ENCODE measurements at regions of chr1 and their contacts with region 1.

Region 1: DNA sequence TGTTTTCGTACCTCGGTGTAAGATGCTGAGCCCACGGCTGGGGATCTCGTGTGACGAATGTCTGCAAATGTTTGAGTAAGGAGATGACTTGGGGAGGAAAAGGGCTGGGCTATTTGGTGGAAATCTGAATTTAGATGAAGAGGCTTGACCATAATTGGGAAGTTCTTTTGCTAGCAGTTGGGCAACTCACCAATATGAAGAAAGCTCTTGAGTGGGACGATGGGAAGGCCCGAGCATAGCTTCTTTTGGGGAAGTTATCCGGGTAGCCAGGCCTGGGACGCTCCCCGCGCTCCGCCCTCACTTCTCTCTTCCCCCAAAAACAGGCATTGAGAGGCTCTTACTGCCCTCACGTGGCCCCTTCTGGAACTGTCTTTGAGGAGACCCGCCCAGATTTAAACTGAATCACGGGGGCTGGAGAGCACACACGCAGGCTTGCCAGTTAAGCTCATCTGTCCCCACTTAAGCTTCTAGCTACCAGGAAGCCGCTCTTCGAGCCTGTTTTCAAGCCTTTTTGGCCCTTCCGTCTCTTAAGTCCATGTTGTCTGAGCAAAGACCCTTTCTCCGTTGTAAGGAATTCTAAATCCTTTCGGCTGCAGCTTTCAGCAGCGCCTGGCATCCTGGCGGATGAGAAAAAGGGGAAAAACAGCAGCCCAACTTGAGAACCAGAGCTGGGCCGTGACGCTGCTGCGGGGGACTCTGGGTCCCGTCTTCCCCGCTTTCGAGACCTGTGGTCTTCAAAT is 93.1 kb downstream of the NID1 start:
- DNase-seq: peak; percentile 88
- CTCF ChIP-seq: peak; percentile 83

Region 2: DNA sequence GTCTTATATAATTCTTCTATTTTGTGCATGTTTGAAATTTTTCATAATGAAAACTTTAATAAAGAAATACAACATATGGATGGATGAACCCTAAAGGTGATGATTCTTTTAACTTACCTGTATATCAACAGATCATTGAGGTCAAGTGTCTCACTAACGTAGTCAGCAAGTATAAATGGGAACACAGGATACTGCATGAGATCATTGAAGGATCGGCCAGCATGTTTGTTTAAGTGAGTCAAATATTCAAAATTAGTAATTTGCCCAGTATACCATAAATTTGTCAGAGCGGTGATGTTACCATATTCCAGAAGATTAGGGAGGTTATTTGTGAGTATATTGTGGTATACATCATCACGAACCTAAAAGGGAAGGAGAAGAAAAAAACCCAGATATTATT is 251.2 kb before region 1 on chr1:
- CTCF ChIA-PET with region 1: no interaction called
- POLR2A ChIA-PET with region 1: no interaction called
- DNase-seq: no peak
- CTCF ChIP-seq: no peak

Region 3: GRCh38 chr1:235783148-235783776 is 188.5 kb before region 1 on chr1:
- CTCF ChIA-PET with region 1: interaction called, 19 read pairs
- POLR2A ChIA-PET with region 1: no interaction called
- DNase-seq: no peak
- CTCF ChIP-seq: no peak

Region 4: GRCh38 chr1:235917267-235917811 is 54.4 kb before region 1 on chr1:
- CTCF ChIA-PET with region 1: interaction called, 11 read pairs
- POLR2A ChIA-PET with region 1: no interaction called
- DNase-seq: peak; percentile 70
- CTCF ChIP-seq: no peak

Region 5: DNA sequence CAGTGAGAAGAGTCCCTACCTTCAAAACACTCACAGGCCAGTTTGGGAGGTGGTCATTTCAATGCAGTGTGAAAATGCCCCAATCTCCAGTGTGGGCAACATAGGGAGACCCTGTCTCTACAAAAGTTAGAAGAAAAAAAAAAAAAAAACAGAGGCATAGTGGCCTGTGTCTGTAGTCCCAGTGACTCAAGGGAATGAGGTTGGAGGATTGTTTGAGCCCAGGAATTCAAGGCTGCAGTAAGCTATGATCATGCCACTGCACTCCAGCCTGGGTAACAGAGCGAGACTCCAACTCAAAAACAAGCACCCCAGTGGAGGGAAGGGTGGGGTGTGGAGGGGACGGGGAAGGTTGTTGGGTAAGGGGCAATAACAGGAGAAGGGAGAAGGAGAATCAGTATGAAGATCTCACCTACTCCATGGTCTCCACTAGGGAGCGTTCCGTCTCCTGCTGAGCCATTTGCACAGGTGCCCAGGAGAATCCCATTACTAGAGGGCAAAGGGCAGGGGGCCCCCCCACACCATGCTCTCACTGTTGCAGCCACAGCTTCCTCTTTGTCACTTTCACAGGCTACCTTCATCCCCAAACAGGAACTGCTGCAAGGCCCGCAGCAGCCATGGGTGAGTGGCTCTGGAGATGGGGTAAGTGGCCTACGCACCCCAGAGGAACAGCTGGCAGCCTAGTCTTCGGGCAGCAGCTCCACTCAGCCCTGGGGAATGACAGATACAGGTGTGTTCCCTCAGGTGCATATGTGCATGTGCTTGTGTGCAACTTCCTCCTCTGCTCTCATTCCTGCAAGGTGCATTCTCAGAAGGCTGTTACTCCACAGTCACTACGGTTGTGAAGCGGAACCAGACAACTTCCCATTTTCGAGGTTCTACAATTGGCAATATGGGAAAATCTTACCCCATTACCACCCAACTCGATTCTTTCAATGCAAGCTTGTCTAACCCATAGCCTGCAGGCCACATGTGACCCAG is 17.1 kb before region 1 on chr1:
- CTCF ChIA-PET with region 1: interaction called, 85 read pairs
- POLR2A ChIA-PET with region 1: no interaction called
- DNase-seq: peak; percentile 83
- CTCF ChIP-seq: peak; percentile 23

Region 6: GRCh38 chr1:235999259-235999925 is 27.7 kb after region 1 on chr1:
- CTCF ChIA-PET with region 1: interaction called, 16 read pairs
- POLR2A ChIA-PET with region 1: no interaction called
- DNase-seq: peak; percentile 71
- CTCF ChIP-seq: no peak

Region 7: DNA sequence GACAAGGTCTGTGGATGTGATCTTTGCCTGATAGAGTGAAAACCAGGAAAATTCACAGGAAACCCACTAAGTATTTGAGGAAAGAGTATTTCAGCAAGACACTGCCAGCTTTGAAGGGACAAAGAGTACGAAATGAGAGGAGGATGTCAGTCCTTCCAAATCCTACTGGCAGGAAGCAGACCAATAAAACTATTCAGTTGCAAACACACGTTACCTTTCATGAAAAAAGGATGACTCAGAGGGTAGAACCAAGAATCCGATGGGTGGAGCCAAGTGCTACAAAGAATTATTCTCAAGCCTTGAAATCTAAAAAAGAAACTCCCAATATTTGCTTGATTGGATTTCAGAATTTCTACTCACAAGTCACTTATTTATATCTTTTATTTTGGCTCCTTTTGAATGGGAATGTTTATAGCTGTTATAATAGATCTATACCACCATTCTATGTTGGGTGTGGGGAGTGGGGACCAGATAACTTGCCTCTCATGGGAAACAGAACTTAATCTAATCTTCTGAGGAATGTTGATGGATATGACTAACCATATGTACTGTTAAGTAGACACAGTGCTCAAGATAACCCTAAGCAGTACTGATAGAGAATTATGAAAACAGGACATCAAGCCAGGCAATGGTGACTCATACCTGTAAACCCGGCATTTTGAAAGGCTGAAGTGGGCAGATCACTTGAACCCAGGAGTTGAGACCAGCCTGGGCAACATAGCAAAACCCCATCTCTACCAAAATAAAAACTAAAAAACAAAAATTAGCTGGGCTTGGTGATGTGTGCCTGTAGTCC is 651.8 kb after region 1 on chr1:
- CTCF ChIA-PET with region 1: no interaction called
- POLR2A ChIA-PET with region 1: no interaction called
- DNase-seq: no peak
- CTCF ChIP-seq: no peak